CD8-positive, alpha-beta T cell (primary cell): ENCODE measurements at regions of chr20 and their contacts with region 1.

Region 1: GRCh38 chr20:1776681-1777475 is 118.3 kb upstream of the SIRPA start:
- DNase-seq: peak; percentile 69 to 91 (median 84)
- ATAC-seq: peak; percentile 94
- H3K4me3 ChIP-seq: peak overlapping the region; percentile 61 to 68
- H3K4me3 Mint-ChIP-seq: peak overlapping the region; percentile 84
- H3K27ac ChIP-seq: peak overlapping the region in 1 of 2 experiments; percentile 18
- H3K27ac Mint-ChIP-seq: peak overlapping the region; percentile 56
- H3K4me1 ChIP-seq: peaks cover 7% of the 10 kb centered on the region
- H3K4me1 Mint-ChIP-seq: peaks cover 16% of the 10 kb centered on the region
- H3K27me3 ChIP-seq: no peaks in the 10 kb centered on the region
- H3K27me3 Mint-ChIP-seq: peaks cover 13% of the 10 kb centered on the region
- CTCF ChIP-seq: peak; percentile 78

Region 2: DNA sequence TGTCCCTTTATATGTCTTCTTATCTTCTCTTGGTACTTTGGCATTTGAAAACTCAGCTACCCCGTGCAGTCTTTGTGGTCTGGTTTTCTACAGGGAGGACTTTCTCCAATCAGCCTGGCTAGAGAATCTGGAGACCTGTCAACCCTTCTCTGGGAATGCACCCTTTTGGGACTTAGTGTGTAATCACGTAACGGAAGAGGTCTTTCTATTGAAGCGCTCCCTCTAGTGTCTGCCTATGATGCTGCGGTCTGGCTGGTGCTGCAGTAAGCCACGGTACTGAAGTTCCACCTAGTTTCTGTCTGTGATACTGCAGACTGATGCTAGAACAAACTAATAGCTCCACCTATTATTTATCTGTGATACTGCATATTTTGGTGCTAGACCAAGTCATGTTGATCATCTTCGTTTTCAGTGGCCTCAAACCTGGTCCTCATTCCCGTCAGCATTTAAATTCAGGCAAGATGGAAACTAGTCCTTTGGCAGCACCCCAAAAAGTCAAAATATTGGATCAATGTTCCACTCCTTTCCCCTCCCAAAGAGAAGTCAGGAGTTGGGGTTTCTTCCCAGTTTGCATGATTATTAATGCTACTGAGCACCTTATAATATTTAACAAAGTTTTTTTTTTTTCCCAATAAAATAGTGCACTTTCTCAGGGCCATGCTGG is 273.2 kb before region 1 on chr20:
- CTCF ChIA-PET with region 1: interaction called, 25 read pairs
- POLR2A ChIA-PET with region 1: no interaction called
- intact Hi-C with region 1: no loop called
- DNase-seq: peak; percentile 54 to 91 (median 73)
- ATAC-seq: peak; percentile 100
- H3K4me3 ChIP-seq: no peak overlapping the region
- H3K4me3 Mint-ChIP-seq: no peak overlapping the region
- H3K27ac ChIP-seq: no peak overlapping the region
- H3K27ac Mint-ChIP-seq: no peak overlapping the region
- H3K4me1 ChIP-seq: peaks cover 3% of the 10 kb centered on the region
- H3K4me1 Mint-ChIP-seq: peaks cover 5% of the 10 kb centered on the region
- H3K27me3 ChIP-seq: no peaks in the 10 kb centered on the region
- H3K27me3 Mint-ChIP-seq: peaks cover 30% of the 10 kb centered on the region
- CTCF ChIP-seq: peak; percentile 99

Region 3: DNA sequence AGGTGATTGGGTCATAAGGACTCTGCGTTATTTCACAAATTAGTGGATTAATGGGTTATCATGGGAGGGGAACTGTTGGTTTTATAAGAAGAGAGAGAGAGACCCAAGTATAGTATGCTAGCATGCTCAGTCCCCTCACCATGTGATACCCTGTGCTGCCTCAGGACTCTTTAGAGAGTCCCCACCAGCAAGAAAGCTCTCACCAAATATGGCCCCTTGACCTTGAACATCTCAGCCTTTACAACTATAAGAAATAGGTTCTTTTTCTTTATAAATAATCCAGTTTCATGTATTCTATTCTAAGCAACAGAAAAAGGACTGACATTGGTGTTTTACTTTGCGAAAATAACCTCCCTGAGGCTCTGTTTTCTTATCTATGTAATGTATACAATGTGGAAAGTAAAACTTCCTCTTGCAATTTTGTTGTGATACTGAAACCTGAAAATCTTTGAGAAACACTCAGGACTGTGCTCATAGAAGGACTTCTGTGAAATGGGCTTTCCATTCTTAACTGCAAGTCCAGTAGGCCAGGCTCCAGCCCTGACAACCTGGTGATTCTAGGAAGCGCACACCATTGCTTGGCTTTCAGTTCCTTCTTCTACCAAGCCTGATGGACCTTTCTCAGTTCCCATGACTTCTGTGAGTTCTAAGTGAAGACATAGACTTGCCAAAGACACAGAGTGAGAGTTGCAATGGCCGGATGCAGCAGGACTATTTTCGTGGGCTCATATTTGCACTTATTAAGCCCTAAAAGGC is 241.3 kb before region 1 on chr20:
- CTCF ChIA-PET with region 1: interaction called, 25 read pairs
- POLR2A ChIA-PET with region 1: no interaction called
- intact Hi-C with region 1: no loop called
- DNase-seq: no peak
- ATAC-seq: no peak
- H3K4me3 ChIP-seq: no peak overlapping the region
- H3K4me3 Mint-ChIP-seq: no peak overlapping the region
- H3K27ac ChIP-seq: no peak overlapping the region
- H3K27ac Mint-ChIP-seq: no peak overlapping the region
- H3K4me1 ChIP-seq: no peaks in the 10 kb centered on the region
- H3K4me1 Mint-ChIP-seq: peaks cover 7% of the 10 kb centered on the region
- H3K27me3 ChIP-seq: no peaks in the 10 kb centered on the region
- H3K27me3 Mint-ChIP-seq: peaks cover 2% of the 10 kb centered on the region
- CTCF ChIP-seq: no peak

Region 4: GRCh38 chr20:1718604-1719384 is 58.1 kb before region 1 on chr20:
- CTCF ChIA-PET with region 1: no interaction called
- POLR2A ChIA-PET with region 1: no interaction called
- intact Hi-C with region 1: no loop called
- DNase-seq: no peak
- ATAC-seq: no peak
- H3K4me3 ChIP-seq: no peak overlapping the region
- H3K4me3 Mint-ChIP-seq: no peak overlapping the region
- H3K27ac ChIP-seq: no peak overlapping the region
- H3K27ac Mint-ChIP-seq: no peak overlapping the region
- H3K4me1 ChIP-seq: no peaks in the 10 kb centered on the region
- H3K4me1 Mint-ChIP-seq: peaks cover 16% of the 10 kb centered on the region
- H3K27me3 ChIP-seq: no peaks in the 10 kb centered on the region
- H3K27me3 Mint-ChIP-seq: no peaks in the 10 kb centered on the region
- CTCF ChIP-seq: no peak

Region 5: DNA sequence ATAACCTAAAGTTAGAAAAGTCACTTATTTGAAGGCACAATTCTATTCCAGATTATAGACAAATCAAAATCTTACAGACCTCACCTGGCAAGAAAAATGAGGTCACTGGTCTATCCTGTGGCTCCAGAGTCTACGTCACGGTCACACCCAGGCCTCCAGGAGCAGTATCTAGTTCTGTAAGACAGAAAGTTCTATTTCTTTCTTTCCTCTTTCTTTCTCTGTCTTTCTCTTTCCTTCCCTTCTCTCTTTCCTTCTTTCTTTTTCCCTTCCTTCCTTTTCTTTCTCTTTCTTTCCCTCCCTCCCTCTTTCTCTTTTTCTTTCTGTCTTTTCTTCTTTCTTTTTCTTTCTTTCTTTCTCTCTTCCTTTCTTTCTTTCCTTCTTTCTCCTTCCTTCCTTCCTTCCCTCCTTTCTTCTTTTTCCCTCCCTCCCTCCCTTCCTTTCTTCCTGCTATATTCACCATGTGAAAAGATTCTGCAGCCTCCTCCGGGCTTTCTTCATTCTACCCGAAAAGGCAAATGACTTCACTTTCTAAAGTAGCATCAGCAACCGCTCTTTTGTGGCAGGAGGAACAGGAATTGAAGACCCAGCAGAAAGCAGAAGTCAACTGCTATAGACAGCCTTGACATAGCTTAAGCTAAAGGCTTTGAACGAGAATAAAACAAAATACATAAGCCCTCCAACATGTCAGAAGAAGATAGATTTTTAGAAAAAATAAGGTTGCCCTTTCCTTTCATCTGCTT is 35.4 kb before region 1 on chr20:
- CTCF ChIA-PET with region 1: interaction called, 14 read pairs
- POLR2A ChIA-PET with region 1: no interaction called
- intact Hi-C with region 1: no loop called
- DNase-seq: no peak
- ATAC-seq: no peak
- H3K4me3 ChIP-seq: no peak overlapping the region
- H3K4me3 Mint-ChIP-seq: no peak overlapping the region
- H3K27ac ChIP-seq: no peak overlapping the region
- H3K27ac Mint-ChIP-seq: no peak overlapping the region
- H3K4me1 ChIP-seq: no peaks in the 10 kb centered on the region
- H3K4me1 Mint-ChIP-seq: peaks cover 17% of the 10 kb centered on the region
- H3K27me3 ChIP-seq: peaks cover 0 to 4% of the 10 kb centered on the region in 2 experiments
- H3K27me3 Mint-ChIP-seq: peaks cover 5% of the 10 kb centered on the region
- CTCF ChIP-seq: no peak

Region 6: DNA sequence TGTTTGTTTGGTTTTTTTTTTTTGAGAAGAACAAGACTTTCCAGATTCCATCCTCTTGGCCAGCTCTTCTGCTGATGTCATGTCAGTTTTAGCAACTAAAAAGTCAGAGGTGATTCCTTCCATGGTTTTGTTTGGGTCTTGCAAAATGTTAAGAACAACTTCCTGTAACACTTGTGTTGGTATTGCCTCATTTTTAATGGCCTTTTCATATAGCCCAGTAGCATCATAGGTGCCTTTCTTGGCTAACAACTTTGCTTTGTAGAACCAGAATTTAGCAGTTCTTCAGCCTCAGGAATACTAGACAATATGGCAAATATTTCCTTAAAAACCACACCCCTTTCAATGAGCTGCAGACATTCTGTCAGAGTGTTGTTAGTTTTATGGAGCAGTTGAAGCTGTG is 19.8 kb before region 1 on chr20:
- CTCF ChIA-PET with region 1: interaction called, 15 read pairs
- POLR2A ChIA-PET with region 1: no interaction called
- intact Hi-C with region 1: no loop called
- DNase-seq: no peak
- ATAC-seq: no peak
- H3K4me3 ChIP-seq: no peak overlapping the region
- H3K4me3 Mint-ChIP-seq: no peak overlapping the region
- H3K27ac ChIP-seq: no peak overlapping the region
- H3K27ac Mint-ChIP-seq: no peak overlapping the region
- H3K4me1 ChIP-seq: no peaks in the 10 kb centered on the region
- H3K4me1 Mint-ChIP-seq: no peaks in the 10 kb centered on the region
- H3K27me3 ChIP-seq: no peaks in the 10 kb centered on the region
- H3K27me3 Mint-ChIP-seq: no peaks in the 10 kb centered on the region
- CTCF ChIP-seq: no peak

Region 7: GRCh38 chr20:1790386-1790785 is 13.5 kb after region 1 on chr20:
- CTCF ChIA-PET with region 1: interaction called, 15 read pairs
- POLR2A ChIA-PET with region 1: interaction called, 3 read pairs
- intact Hi-C with region 1: no loop called
- DNase-seq: no peak
- ATAC-seq: no peak
- H3K4me3 ChIP-seq: no peak overlapping the region
- H3K4me3 Mint-ChIP-seq: no peak overlapping the region
- H3K27ac ChIP-seq: no peak overlapping the region
- H3K27ac Mint-ChIP-seq: no peak overlapping the region
- H3K4me1 ChIP-seq: no peaks in the 10 kb centered on the region
- H3K4me1 Mint-ChIP-seq: no peaks in the 10 kb centered on the region
- H3K27me3 ChIP-seq: peaks cover 0 to 5% of the 10 kb centered on the region in 2 experiments
- H3K27me3 Mint-ChIP-seq: peaks cover 37% of the 10 kb centered on the region
- CTCF ChIP-seq: no peak